ENCODE measurements at regions of chrX and their contacts with region 1.

Region 1: GRCh38 chrX:127038065-127038464 is 218.5 kb downstream of the PRR32 start:
- DNase-seq: peak; percentile 22
- H3K4me3 ChIP-seq: no peak overlapping the region
- H3K27ac ChIP-seq: no peak overlapping the region
- H3K4me1 ChIP-seq: no peaks in the 10 kb centered on the region
- H3K27me3 ChIP-seq: no peaks in the 10 kb centered on the region
- CTCF ChIP-seq: peak; percentile 55; the same call in 1 of the 2 replicates

Region 2: GRCh38 chrX:126448681-126449080 is 589.4 kb before region 1 on chrX:
- CTCF ChIA-PET with region 1: no interaction called
- POLR2A ChIA-PET with region 1: no interaction called
- intact Hi-C with region 1: no loop called
- DNase-seq: no peak
- H3K4me3 ChIP-seq: no peak overlapping the region
- H3K27ac ChIP-seq: no peak overlapping the region
- H3K4me1 ChIP-seq: no peaks in the 10 kb centered on the region
- H3K27me3 ChIP-seq: no peaks in the 10 kb centered on the region
- CTCF ChIP-seq: no peak

Region 3: DNA sequence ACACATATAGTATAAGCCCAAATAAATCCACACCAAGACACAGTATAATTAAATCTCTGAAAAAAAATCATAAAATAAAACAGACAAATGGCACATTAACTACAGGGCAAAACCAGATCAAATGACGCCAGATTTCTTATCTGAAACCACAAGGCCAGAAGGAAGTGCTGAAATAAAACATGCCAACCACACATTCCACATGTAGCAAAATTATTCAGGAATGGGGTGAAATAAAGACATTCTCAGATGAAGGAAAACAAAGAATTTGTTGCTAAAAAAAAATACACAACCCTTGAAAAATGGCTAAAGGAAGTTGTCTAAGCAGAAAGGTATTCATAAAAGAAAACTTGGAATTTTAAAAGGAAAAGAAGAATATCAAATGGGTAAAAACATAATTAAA is 480.9 kb before region 1 on chrX:
- CTCF ChIA-PET with region 1: no interaction called
- POLR2A ChIA-PET with region 1: no interaction called
- intact Hi-C with region 1: loop called (anchors 10 kb)
- DNase-seq: no peak
- H3K4me3 ChIP-seq: no peak overlapping the region
- H3K27ac ChIP-seq: no peak overlapping the region
- H3K4me1 ChIP-seq: no peaks in the 10 kb centered on the region
- H3K27me3 ChIP-seq: no peaks in the 10 kb centered on the region
- CTCF ChIP-seq: no peak

Region 4: GRCh38 chrX:126770194-126770593 is 267.9 kb before region 1 on chrX:
- CTCF ChIA-PET with region 1: interaction called, 7 read pairs
- POLR2A ChIA-PET with region 1: no interaction called
- intact Hi-C with region 1: loop called (anchors 2 kb)
- DNase-seq: peak; percentile 37
- H3K4me3 ChIP-seq: no peak overlapping the region
- H3K27ac ChIP-seq: no peak overlapping the region
- H3K4me1 ChIP-seq: peaks cover 4% of the 10 kb centered on the region
- H3K27me3 ChIP-seq: no peaks in the 10 kb centered on the region
- CTCF ChIP-seq: peak; percentile 61

Measured in A673 (cell line).